OCI-LY7 (cell line): ENCODE measurements at regions of chr1 and their contacts with region 1.

Region 1: DNA sequence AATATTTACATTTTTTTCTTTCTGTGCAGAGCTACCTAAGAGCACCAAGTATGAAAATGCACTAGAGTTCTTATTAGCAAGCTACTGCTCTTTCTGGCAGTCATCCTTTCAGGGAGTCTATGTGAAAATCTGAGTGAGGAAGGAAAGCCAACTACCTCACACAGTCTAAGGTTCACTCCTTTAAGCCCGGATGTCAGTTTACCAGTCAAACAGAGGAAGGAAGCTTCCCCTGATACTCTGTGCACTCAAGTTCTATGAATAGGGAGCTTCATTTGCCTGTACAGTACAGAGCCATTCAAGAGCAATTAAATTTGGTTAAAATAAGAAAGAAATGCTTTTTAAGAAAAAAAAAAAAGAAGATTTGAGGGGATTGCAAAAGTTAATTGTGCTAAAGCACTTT is 6.9 kb downstream of the COL11A1 start:
- DNase-seq: no peak
- H3K4me3 ChIP-seq: no peak overlapping the region
- H3K27ac ChIP-seq: no peak overlapping the region
- H3K4me1 ChIP-seq: no peaks in the 10 kb centered on the region
- CTCF ChIP-seq: no peak

Region 2: DNA sequence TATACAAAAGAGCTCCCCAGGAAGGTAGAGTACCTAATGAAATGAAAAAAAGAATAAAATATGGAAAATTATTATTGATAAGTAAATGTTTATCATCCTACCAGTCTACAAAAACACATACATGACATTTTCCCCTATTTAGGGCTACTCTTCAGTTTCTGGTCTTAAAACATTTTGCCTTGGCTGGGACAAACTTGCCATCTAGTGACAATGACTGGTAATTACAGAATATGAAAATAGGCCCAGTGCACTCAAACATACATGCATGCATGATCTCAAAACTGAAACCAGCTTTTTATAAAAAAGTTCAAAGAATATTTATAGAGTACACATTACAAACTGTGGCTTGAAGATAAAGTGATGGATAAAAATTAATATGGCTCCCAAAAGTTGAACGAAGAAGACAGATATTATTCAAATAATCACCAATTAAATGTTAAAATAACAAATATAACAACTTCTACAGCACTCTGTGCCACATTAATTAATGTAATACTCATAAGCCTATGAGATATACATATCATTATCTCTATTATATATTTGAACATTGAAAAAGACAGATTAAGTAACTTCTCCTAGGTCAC is 413.6 kb after region 1 on chr1:
- CTCF ChIA-PET with region 1: no interaction called
- POLR2A ChIA-PET with region 1: no interaction called
- intact Hi-C with region 1: loop called (anchors 5 kb)
- DNase-seq: peak; percentile 55
- H3K4me3 ChIP-seq: no peak overlapping the region
- H3K27ac ChIP-seq: no peak overlapping the region
- H3K4me1 ChIP-seq: peaks cover 10% of the 10 kb centered on the region
- CTCF ChIP-seq: peak; percentile 85